Activated CD4-positive, alpha-beta T cell treated with anti-CD3 and anti-CD28 coated beads for 36 hours (primary cell): ENCODE measurements at regions of chr16 and their contacts with region 1.

Region 1: GRCh38 chr16:1610276-1611017 is 1.4 kb downstream of the IFT140 start:
- DNase-seq: peak; percentile 95
- ATAC-seq: peak; percentile 67
- H3K4me3 Mint-ChIP-seq: peak overlapping the region; percentile 88
- H3K27ac Mint-ChIP-seq: peak overlapping the region; percentile 97
- H3K4me1 Mint-ChIP-seq: peaks cover 21% of the 10 kb centered on the region
- H3K27me3 Mint-ChIP-seq: peaks cover 2% of the 10 kb centered on the region

Region 2: DNA sequence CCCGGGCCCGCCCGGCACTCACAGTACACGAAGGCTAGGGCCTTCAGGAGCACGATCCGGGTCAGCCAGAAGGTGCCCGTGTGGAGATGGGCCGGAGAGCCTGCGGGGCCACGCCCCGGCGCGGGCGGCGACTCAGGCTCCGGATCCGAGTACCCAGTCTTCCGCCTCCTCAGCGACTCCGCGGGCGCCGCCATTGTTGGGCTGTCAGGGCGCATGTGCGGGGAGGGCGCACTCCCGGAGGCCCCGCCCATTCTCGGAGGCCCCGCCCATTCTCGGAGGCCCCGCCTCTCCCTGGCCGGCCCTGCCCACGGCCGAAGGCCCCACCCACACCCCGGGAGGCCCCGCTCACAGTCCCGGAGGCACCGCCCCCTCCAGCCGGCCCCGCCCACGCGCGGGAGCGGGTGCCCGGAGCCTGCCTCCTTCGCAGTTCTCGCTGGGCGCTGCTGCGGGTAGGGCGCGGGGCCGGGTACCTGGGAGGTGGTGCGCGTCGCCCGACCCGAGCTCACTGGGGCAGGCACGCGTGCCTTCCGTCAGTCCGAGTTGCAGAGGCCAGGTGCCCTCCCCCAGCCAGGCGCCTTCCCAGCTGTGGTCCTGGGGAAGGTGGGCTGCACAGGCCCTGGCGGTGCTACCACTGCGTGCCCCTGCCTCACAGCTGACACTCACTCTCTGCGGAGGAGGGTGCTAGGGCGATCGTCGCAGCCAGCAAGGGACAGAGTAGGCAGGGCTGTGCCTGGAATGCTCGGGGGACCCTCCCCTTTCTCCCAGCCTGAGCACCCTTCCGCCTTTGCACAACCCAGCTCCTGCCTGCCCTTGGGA is 639.5 kb before region 1 on chr16 and contains the start of gene LMF1:
- CTCF ChIA-PET with region 1: no interaction called
- POLR2A ChIA-PET with region 1: no interaction called
- intact Hi-C with region 1: loop called in 1 of 2 experiments (anchors 5 kb)
- DNase-seq: peak; percentile 98
- ATAC-seq: peak; percentile 93
- H3K4me3 Mint-ChIP-seq: peak within 1 kb of the TSS; percentile 76
- H3K27ac Mint-ChIP-seq: peak within 1 kb of the TSS; percentile 78
- H3K4me1 Mint-ChIP-seq: peaks cover 15% of the 10 kb centered on the region
- H3K27me3 Mint-ChIP-seq: no peaks in the 10 kb centered on the region
- total RNA-seq, gene LMF1: 9.5 to 12.2 TPM

Region 3: GRCh38 chr16:1474796-1475551 is 135.5 kb before region 1 on chr16 and contains the start of gene CLCN7:
- CTCF ChIA-PET with region 1: no interaction called
- POLR2A ChIA-PET with region 1: interaction called, 3 read pairs
- intact Hi-C with region 1: loop called in 1 of 2 experiments (anchors 2 kb)
- DNase-seq: peak; percentile 95
- ATAC-seq: peak; percentile 91
- H3K4me3 Mint-ChIP-seq: peak within 1 kb of the TSS; percentile 73
- H3K27ac Mint-ChIP-seq: peak within 1 kb of the TSS; percentile 81
- H3K4me1 Mint-ChIP-seq: peaks cover 22% of the 10 kb centered on the region
- H3K27me3 Mint-ChIP-seq: no peaks in the 10 kb centered on the region
- total RNA-seq, gene CLCN7: 29.9 to 33.7 TPM

Region 4: DNA sequence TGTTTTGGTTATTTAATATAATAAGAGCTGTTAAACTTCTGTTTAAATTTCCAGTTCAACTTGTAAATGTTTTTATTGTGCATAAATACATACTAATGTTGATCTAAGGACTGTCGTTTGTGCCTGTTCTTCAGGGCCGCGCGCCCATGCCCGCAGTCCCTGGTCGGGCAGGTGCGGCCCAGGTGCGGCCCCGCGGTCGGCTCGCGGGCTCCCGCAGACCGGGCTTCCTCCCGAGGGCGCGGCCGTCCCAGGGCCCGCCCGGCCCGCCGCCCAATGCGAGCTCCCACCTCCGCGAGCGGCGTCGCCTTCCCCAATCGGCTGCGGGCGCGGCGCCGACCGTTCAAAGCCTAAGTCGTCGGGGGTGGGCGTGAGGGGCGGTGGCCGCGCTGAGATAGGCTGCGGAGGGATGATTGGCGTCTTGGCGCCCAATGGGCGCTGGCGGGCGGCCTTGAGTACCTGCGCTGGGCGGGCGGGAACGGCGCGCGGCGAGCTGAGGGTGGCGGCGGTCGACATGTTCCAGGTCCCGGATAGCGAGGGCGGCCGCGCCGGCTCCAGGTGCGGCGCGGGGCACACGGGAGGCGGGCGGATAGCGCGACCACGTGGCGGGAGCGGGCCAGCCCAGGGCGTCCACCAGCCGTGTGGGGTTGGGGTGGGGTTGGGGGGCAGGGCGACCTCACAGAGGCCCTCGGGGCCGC is 67.5 kb after region 1 on chr16 and contains the start of gene JPT2:
- CTCF ChIA-PET with region 1: interaction called, 4 read pairs
- POLR2A ChIA-PET with region 1: interaction called, 4 read pairs
- intact Hi-C with region 1: loop called (anchors 1 to 2 kb)
- DNase-seq: peak; percentile 98
- ATAC-seq: peak; percentile 99
- H3K4me3 Mint-ChIP-seq: peak within 1 kb of the TSS; percentile 94
- H3K27ac Mint-ChIP-seq: peak within 1 kb of the TSS; percentile 89
- H3K4me1 Mint-ChIP-seq: peaks cover 26% of the 10 kb centered on the region
- H3K27me3 Mint-ChIP-seq: no peaks in the 10 kb centered on the region
- total RNA-seq, gene JPT2: 77.1 to 111 TPM

Region 5: GRCh38 chr16:1929578-1930337 is 319.3 kb after region 1 on chr16:
- CTCF ChIA-PET with region 1: interaction called, 3 read pairs
- POLR2A ChIA-PET with region 1: no interaction called
- intact Hi-C with region 1: loop called in 1 of 2 experiments (anchors 2 kb)
- DNase-seq: peak; percentile 96
- ATAC-seq: peak; percentile 98
- H3K4me3 Mint-ChIP-seq: peak overlapping the region; percentile 47
- H3K27ac Mint-ChIP-seq: no peak overlapping the region
- H3K4me1 Mint-ChIP-seq: peaks cover 2% of the 10 kb centered on the region
- H3K27me3 Mint-ChIP-seq: peaks cover under 1% of the 10 kb centered on the region

Region 6: GRCh38 chr16:2205104-2205966 is 594.9 kb after region 1 on chr16 and contains the start of gene MLST8:
- CTCF ChIA-PET with region 1: no interaction called
- POLR2A ChIA-PET with region 1: no interaction called
- intact Hi-C with region 1: loop called in 1 of 2 experiments (anchors 10 kb)
- DNase-seq: peak; percentile 92
- ATAC-seq: peak; percentile 84
- H3K4me3 Mint-ChIP-seq: peak within 1 kb of the TSS; percentile 83
- H3K27ac Mint-ChIP-seq: peak within 1 kb of the TSS; percentile 84
- H3K4me1 Mint-ChIP-seq: peaks cover 16% of the 10 kb centered on the region
- H3K27me3 Mint-ChIP-seq: no peaks in the 10 kb centered on the region
- total RNA-seq, gene MLST8: 61.3 to 76.1 TPM